Pancreas (tissue), 10 donors: ENCODE measurements at regions of chr4 and their contacts with region 1.

Region 1: DNA sequence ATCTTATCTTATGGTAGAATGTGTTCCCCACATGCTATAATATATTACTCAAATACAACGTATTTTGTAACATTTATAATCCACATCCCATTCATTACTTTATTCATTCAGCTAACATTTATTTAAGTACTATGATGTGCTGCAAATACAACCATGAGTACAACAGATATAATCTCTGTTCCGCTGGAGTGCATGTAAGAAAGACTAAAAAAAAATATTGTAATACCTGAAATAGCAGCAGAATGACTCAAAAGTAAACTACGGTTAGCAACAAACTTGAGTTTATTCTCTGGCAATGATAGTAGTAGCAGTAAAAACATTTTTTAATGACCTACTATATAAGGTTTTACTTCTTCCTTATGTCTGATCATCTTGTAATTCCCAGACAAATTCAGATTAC is 1776.3 kb downstream of the STIM2 start:
- DNase-seq: no peak
- ATAC-seq: no peak
- H3K4me3 ChIP-seq: no peak overlapping the region
- H3K27ac ChIP-seq: no peak overlapping the region
- H3K4me1 ChIP-seq: no peaks in the 10 kb centered on the region
- H3K27me3 ChIP-seq: peaks cover 0 to 7% (median 0%) of the 10 kb centered on the region in 4 donors
- CTCF ChIP-seq: no peak

Region 2: GRCh38 chr4:28665306-28665705 is 28.3 kb after region 1 on chr4:
- intact Hi-C with region 1: loop called in 1 of 3 experiments (anchors 2 kb)
- DNase-seq: no peak
- ATAC-seq: no peak
- H3K4me3 ChIP-seq: no peak overlapping the region
- H3K27ac ChIP-seq: no peak overlapping the region
- H3K4me1 ChIP-seq: no peaks in the 10 kb centered on the region
- H3K27me3 ChIP-seq: no peaks in the 10 kb centered on the region
- CTCF ChIP-seq: no peak

Region 3: DNA sequence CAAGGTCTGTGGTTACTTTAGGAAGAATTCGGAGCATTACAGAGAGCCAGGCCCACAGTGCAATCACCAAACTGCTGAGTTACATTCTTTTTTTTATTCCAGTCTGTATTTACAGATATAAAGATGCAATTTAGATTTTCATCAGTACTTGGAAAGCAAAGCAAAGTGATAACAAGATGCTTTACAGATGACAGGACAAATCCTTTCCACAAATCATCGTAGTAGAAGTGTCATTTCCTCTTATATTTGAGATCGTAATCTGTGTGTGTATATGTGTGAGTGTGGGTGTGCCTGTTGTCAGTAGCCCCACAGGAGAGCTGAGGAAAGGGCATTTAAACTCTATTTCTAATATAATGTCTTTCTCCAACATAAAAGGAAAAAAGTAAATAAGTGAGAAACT is 117.4 kb after region 1 on chr4:
- intact Hi-C with region 1: no loop called
- DNase-seq: no peak
- ATAC-seq: no peak
- H3K4me3 ChIP-seq: no peak overlapping the region
- H3K27ac ChIP-seq: no peak overlapping the region
- H3K4me1 ChIP-seq: no peaks in the 10 kb centered on the region
- H3K27me3 ChIP-seq: no peaks in the 10 kb centered on the region
- CTCF ChIP-seq: no peak